AG04449 (cell line): ENCODE measurements at regions of chr9 and their contacts with region 1.

Region 1: GRCh38 chr9:115591584-115591984 is 473.6 kb upstream of the TNC start:
- DNase-seq: peak; percentile 99
- H3K4me3 ChIP-seq: no peak overlapping the region
- CTCF ChIP-seq: peak; percentile 74

Region 2: GRCh38 chr9:115604831-115605483 is 13.4 kb after region 1 on chr9:
- CTCF ChIA-PET with region 1: interaction called, 9 read pairs
- POLR2A ChIA-PET with region 1: interaction called, 15 read pairs
- DNase-seq: peak; percentile 84
- H3K4me3 ChIP-seq: no peak overlapping the region
- CTCF ChIP-seq: no peak

Region 3: DNA sequence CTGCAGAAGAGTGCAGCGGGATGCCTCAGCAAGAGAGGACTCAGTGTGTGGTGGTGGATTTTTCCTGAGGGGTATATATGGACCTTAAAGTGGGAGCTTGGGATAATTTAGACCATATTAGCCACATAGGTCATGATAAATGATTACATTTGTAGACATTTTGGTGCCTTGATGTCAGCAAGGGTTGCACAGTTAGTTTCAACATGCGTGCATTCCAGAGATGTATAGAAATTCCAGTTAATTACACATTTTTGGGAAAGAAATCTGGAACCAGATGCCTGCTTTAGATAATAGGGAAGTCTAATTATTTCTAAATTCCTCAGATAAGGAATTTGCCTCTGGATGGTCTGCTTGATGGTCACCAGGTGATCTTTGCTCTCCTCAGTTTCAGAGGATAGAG is 121.4 kb after region 1 on chr9:
- CTCF ChIA-PET with region 1: interaction called, 12 read pairs
- POLR2A ChIA-PET with region 1: interaction called, 4 read pairs
- DNase-seq: no peak
- H3K4me3 ChIP-seq: no peak overlapping the region
- CTCF ChIP-seq: no peak

Region 4: DNA sequence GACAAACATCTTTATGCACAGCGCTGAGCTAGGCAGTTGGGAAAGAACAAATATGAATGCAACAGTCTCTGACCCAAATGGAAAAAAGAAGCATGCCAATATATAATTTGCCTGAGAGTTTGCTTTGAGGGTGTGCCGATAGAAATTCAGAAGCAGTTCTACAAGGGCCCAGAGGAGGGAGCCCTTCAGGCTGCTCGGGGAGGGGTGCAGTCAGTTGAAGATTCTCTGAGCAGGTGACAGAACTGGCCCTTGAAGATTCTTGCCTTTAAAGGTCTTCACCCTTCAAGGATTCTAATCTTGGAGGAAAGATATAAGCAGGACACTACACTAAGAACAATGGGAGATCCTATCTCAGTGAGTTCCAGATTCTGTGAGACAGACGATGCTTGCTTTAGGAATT is 558.3 kb after region 1 on chr9:
- CTCF ChIA-PET with region 1: interaction called, 63 read pairs
- POLR2A ChIA-PET with region 1: interaction called, 3 read pairs
- DNase-seq: no peak
- H3K4me3 ChIP-seq: no peak overlapping the region
- CTCF ChIP-seq: peak; percentile 39

Region 5: GRCh38 chr9:116250891-116251290 is 659.3 kb after region 1 on chr9:
- CTCF ChIA-PET with region 1: interaction called, 10 read pairs
- POLR2A ChIA-PET with region 1: no interaction called
- DNase-seq: no peak
- H3K4me3 ChIP-seq: no peak overlapping the region
- CTCF ChIP-seq: no peak

Region 6: GRCh38 chr9:116661037-116661954 is 1069.7 kb after region 1 on chr9:
- CTCF ChIA-PET with region 1: interaction called, 76 read pairs
- POLR2A ChIA-PET with region 1: no interaction called
- DNase-seq: peak; percentile 61
- H3K4me3 ChIP-seq: no peak overlapping the region
- CTCF ChIP-seq: peak; percentile 74